A673 (cell line): ENCODE measurements at regions of chr5 and their contacts with region 1.

Region 1: DNA sequence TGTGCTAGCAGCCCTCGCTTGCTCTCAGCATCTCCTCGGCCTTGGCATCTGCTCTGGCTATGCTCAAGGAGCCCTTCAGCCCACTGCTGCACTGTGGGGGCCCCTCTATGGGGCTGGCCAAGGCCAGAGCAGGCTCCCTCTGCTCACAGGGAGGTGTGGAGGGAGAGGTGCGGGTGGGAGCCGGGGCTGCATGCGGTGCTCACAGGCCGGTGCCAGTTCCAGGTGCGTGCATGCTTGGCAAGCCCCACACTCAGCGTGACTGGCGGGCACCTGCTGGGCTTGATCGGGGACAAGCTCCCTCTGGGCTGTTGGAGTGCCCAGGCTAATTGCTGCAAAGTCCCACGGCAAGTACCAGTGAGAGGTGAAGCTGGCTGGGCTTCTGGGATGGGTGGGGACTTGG is 170.5 kb downstream of the TRIM36 start:
- DNase-seq: no peak
- H3K4me3 ChIP-seq: no peak overlapping the region
- H3K27ac ChIP-seq: no peak overlapping the region
- H3K4me1 ChIP-seq: no peaks in the 10 kb centered on the region
- H3K27me3 ChIP-seq: no peaks in the 10 kb centered on the region
- CTCF ChIP-seq: no peak

Region 2: DNA sequence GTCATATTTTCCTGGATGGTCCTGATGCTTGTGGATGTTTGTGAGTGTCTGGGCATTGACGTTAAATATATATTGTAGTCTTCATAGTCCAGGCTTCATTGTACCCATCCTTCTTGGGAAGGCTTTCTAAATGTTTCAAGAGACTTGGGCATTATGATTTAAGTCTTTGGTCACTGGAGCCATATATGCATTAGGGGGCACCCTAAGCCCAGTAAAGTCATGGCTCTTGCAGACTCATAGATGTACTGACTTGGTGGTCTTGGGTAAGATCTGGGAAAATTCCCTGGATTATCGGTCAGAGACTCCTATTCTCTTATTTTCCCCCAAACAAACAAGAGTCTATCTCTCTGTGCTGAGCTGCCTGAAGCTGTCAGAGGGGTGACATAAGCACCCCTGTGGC is 100.6 kb before region 1 on chr5:
- CTCF ChIA-PET with region 1: no interaction called
- POLR2A ChIA-PET with region 1: no interaction called
- intact Hi-C with region 1: no loop called
- DNase-seq: peak; percentile 16
- H3K4me3 ChIP-seq: no peak overlapping the region
- H3K27ac ChIP-seq: no peak overlapping the region
- H3K4me1 ChIP-seq: no peaks in the 10 kb centered on the region
- H3K27me3 ChIP-seq: no peaks in the 10 kb centered on the region
- CTCF ChIP-seq: no peak

Region 3: DNA sequence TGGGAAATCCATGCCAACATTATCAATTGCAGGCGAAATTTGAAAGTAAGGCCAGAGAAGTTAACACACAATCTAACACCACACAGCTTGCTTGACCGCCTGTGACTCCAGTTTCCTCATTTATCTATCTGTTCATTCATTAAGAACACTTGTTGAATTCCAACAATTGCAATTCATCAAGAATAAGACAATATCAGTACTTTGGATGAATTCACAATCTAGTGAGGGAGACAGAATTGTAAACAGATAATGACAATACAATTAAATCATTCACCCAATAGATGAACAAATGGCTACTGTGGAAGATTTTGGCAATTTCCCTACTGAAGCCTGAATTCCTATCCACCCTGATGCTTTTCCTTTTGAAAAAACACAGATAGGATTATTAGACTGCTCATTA is 11.1 kb before region 1 on chr5:
- CTCF ChIA-PET with region 1: no interaction called
- POLR2A ChIA-PET with region 1: no interaction called
- intact Hi-C with region 1: loop called (anchors 1 kb)
- DNase-seq: no peak
- H3K4me3 ChIP-seq: no peak overlapping the region
- H3K27ac ChIP-seq: no peak overlapping the region
- H3K4me1 ChIP-seq: no peaks in the 10 kb centered on the region
- H3K27me3 ChIP-seq: no peaks in the 10 kb centered on the region
- CTCF ChIP-seq: no peak